Ovary (tissue), 10 donors: ENCODE measurements at regions of chr5 and their contacts with region 1.

Region 1: GRCh38 chr5:151002250-151002649 is 18.1 kb upstream of the GPX3 start:
- DNase-seq: peak in 1 of 5 donors; percentile 60
- H3K4me3 ChIP-seq: no peak overlapping the region
- H3K27ac ChIP-seq: no peak overlapping the region
- H3K4me1 ChIP-seq: peaks cover 24% of the 10 kb centered on the region
- H3K27me3 ChIP-seq: no peaks in the 10 kb centered on the region
- CTCF ChIP-seq: peak; percentile 58 to 85 (median 84)
- EP300 ChIP-seq: no peak
- POLR2A ChIP-seq: no peak

Region 2: GRCh38 chr5:149088686-149089085 is 1913.6 kb before region 1 on chr5:
- intact Hi-C with region 1: no loop called
- DNase-seq: no peak
- H3K4me3 ChIP-seq: no peak overlapping the region
- H3K27ac ChIP-seq: no peak overlapping the region
- H3K4me1 ChIP-seq: no peaks in the 10 kb centered on the region
- H3K27me3 ChIP-seq: no peaks in the 10 kb centered on the region
- CTCF ChIP-seq: no peak
- EP300 ChIP-seq: no peak
- POLR2A ChIP-seq: no peak

Region 3: GRCh38 chr5:151037561-151038411 is 35.5 kb after region 1 on chr5:
- intact Hi-C with region 1: loop called in 1 of 4 experiments (anchors 5 kb)
- DNase-seq: peak; percentile 62 to 79 (median 72)
- H3K4me3 ChIP-seq: no peak overlapping the region
- H3K27ac ChIP-seq: peak overlapping the region; percentile 51 to 60
- H3K4me1 ChIP-seq: peaks cover 28% of the 10 kb centered on the region
- H3K27me3 ChIP-seq: no peaks in the 10 kb centered on the region
- CTCF ChIP-seq: no peak
- EP300 ChIP-seq: no peak
- POLR2A ChIP-seq: no peak

Region 4: GRCh38 chr5:151107738-151108508 is 105.7 kb after region 1 on chr5:
- intact Hi-C with region 1: loop called in 2 of 4 experiments (anchors 5 to 10 kb)
- DNase-seq: no peak
- H3K4me3 ChIP-seq: no peak overlapping the region
- H3K27ac ChIP-seq: no peak overlapping the region
- H3K4me1 ChIP-seq: peaks cover 18% of the 10 kb centered on the region
- H3K27me3 ChIP-seq: no peaks in the 10 kb centered on the region
- CTCF ChIP-seq: no peak
- EP300 ChIP-seq: no peak
- POLR2A ChIP-seq: no peak

Region 5: DNA sequence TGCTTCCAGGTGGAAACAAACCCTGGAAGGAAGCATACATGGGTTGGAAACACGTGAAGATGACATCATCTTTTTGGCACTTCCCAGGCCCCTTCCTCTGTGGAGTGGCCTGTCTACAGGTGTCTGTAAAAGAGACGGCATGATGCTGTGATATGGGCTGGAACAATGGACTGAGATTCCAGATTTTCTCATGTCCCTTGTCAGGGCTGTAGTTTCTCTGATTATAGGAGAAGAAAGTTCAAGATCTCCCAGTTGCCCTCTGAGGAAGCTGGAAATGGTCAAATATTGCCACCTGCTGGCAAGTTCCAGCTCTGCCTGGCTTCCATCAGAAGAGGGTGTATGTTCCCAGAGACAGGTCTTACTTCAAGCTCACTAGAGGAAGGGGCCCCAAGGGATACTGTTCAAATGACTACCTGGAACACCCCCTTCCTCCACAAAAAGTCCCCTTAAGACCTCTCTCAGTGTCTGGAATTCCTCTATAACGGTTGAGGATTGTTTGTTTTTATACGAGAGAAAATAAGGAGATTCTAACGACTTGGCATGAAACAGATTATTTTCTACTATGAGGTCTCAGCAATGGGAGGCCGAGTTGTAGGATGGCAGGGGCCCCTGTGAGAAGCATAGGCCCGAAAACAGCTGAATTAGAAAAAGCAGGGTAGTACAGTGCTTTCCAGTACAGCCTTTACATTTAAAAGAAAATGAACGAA is 162.6 kb after region 1 on chr5:
- intact Hi-C with region 1: loop called in 2 of 4 experiments (anchors 5 kb)
- DNase-seq: peak; percentile 69 to 85 (median 82)
- H3K4me3 ChIP-seq: no peak overlapping the region
- H3K27ac ChIP-seq: no peak overlapping the region
- H3K4me1 ChIP-seq: peaks cover 8% of the 10 kb centered on the region
- H3K27me3 ChIP-seq: no peaks in the 10 kb centered on the region
- CTCF ChIP-seq: peak; percentile 56 to 93 (median 85)
- EP300 ChIP-seq: no peak
- POLR2A ChIP-seq: no peak

Region 6: GRCh38 chr5:151252762-151253604 is 250.7 kb after region 1 on chr5 and contains the start of gene GM2A:
- intact Hi-C with region 1: loop called in 1 of 4 experiments (anchors 5 kb)
- DNase-seq: peak; percentile 99
- H3K4me3 ChIP-seq: peak within 1 kb of the TSS; percentile 71
- H3K27ac ChIP-seq: peak within 1 kb of the TSS in 1 of 2 donors; percentile 51
- H3K4me1 ChIP-seq: peaks cover 4% of the 10 kb centered on the region
- H3K27me3 ChIP-seq: no peaks in the 10 kb centered on the region
- CTCF ChIP-seq: no peak
- EP300 ChIP-seq: peak; percentile 46
- POLR2A ChIP-seq: peak; percentile 16
- total RNA-seq, gene GM2A: 14.7 to 38.5 (median 28.6) TPM